ENCODE measurements at regions of chr14 and their contacts with region 1.

Region 1: GRCh38 chr14:105086833-105087307 is 21.6 kb upstream of the GPR132 start:
- DNase-seq: no peak
- H3K4me3 ChIP-seq: peak overlapping the region; percentile 19 to 65 (median 46)
- H3K27ac ChIP-seq: peak overlapping the region; percentile 57 to 85 (median 70)
- H3K4me1 ChIP-seq: peaks cover 36 to 65% (median 37%) of the 10 kb centered on the region in 3 donors
- H3K27me3 ChIP-seq: peaks cover 0 to 53% (median 0%) of the 10 kb centered on the region in 4 donors
- CTCF ChIP-seq: peak; percentile 76 to 89 (median 80)
- POLR2A ChIP-seq: no peak

Region 2: GRCh38 chr14:105168979-105169507 is 82.2 kb after region 1 on chr14:
- intact Hi-C with region 1: loop called (anchors 5 kb)
- DNase-seq: no peak
- H3K4me3 ChIP-seq: peak overlapping the region; percentile 18 to 65 (median 36)
- H3K27ac ChIP-seq: peak overlapping the region in 3 of 4 donors; percentile 1 to 61 (median 57)
- H3K4me1 ChIP-seq: peaks cover 43 to 73% (median 56%) of the 10 kb centered on the region in 3 donors
- H3K27me3 ChIP-seq: peaks cover 0 to 96% (median 0%) of the 10 kb centered on the region in 4 donors
- CTCF ChIP-seq: peak in 5 of 6 experiments; percentile 13 to 53 (median 46)
- POLR2A ChIP-seq: no peak

Region 3: DNA sequence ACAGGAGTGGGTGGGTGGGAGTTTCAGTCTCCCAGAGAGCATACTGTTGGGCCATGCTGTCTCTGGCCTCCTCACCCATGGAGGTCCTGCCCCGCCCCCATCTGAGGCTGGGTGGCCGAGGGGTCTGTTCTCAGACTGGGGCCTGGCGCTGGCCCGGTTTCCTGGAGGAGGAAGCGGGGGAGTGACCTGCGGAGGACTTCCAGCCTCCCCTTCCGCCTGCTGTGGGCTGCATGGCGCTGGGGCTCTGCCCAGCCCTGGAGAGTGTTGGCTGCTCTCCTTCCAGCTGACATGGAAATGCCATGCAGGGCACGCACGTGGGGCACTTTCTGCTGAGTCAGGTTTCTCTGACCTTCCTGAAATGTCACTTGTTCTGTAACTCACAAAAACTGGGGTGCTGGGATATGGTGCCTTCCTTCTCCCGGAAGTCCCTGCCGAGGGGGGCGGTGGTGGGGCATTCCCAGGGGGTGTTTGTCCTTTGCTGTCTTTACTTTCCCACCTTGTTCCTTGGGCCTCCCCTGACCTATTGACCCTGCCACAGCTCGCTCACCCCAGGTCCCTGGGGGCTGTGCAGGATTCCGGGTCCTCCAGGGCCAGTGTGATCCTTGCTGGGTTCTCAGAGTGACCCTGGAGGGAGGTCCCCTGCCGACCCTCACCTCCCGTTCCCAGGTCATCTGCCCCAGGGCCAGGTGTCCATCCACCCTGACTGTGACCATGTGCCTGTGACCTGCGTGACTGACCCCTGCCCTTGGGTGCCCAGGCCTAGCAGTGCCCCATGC is 251.3 kb after region 1 on chr14:
- intact Hi-C with region 1: loop called (anchors 10 kb)
- DNase-seq: no peak
- H3K4me3 ChIP-seq: no peak overlapping the region
- H3K27ac ChIP-seq: peak overlapping the region in 1 of 4 donors; percentile 17
- H3K4me1 ChIP-seq: peaks cover 8 to 61% (median 18%) of the 10 kb centered on the region in 3 donors
- H3K27me3 ChIP-seq: no peaks in the 10 kb centered on the region
- CTCF ChIP-seq: no peak
- POLR2A ChIP-seq: no peak

Region 4: DNA sequence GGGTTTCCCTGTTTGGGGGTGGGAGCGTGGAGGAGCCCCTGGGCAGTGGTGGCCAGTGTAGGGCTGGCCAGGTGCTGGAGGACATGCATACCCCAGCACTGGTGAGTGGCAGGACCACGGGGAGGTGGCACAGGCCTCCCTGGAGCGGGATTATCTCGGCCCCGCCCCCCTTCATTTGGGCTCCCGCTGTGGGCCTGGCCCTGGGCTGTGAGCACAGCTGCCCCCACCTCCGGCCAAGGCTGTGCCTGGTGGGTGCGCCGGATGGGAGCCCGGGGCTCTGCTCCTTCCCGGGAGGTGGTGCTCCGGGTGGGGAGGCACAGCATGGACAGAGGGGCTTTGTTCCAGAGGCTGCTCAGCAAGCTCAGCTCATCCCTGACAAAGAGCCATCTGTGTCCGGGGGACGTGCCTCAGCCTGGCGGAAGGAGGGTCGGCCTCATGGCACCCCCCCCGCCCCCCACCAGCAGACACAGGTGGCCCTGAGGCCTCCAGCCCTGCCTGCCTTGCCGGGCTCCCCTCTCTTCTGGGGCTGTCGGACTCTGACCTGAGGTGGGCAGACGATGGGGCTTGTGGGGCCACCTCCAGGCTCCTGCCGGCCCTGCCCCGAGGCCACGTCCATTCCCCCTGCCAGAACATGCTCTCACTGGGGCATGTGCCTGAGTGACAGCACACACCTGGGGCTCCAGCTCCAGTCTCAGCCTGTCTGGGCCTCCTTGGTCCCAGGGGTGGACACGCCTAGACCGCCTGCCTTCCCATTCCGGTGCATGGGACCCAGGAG is 412.6 kb after region 1 on chr14:
- intact Hi-C with region 1: no loop called
- DNase-seq: no peak
- H3K4me3 ChIP-seq: no peak overlapping the region
- H3K27ac ChIP-seq: peak overlapping the region in 1 of 4 donors; percentile 14
- H3K4me1 ChIP-seq: peaks cover 0 to 22% (median 0%) of the 10 kb centered on the region in 3 donors
- H3K27me3 ChIP-seq: no peaks in the 10 kb centered on the region
- CTCF ChIP-seq: no peak
- POLR2A ChIP-seq: no peak